ENCODE measurements at regions of chr12 and their contacts with region 1.

Region 1: GRCh38 chr12:51424662-51425438 is at the start of gene SLC4A8:
- DNase-seq: peak; percentile 97 to 99
- H3K4me3 ChIP-seq: peak within 1 kb of the TSS; percentile 57
- H3K4me3 Mint-ChIP-seq: peak within 1 kb of the TSS; percentile 81
- H3K27ac Mint-ChIP-seq: peak within 1 kb of the TSS; percentile 69
- H3K4me1 ChIP-seq: peaks cover 26% of the 10 kb centered on the region
- H3K4me1 Mint-ChIP-seq: peaks cover 48% of the 10 kb centered on the region
- H3K27me3 ChIP-seq: no peaks in the 10 kb centered on the region
- H3K27me3 Mint-ChIP-seq: no peaks in the 10 kb centered on the region
- CTCF ChIP-seq: peak; percentile 93 to 98
- total RNA-seq, gene SLC4A8: 62.7 and 67.0 TPM in 2 replicates

Region 2: DNA sequence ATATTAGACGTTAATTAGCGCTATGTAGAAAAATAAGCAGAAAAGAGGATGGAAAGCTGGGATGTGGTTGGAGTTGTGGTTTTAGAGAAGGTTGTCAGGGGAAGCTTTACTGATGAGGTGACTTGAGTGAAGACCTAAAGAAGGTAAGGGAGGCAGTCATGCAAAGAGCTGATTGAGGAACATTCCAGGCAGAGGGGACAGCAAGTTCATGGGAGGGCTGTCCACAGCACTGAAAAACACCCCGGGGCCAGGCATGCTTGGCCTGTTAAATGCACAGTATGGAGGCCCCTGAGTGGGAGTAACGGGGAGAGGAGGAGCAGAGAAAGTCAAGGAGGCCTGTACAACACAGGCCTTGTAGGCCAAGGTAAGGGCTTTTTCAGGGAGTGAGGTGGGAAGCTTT is 170.3 kb before region 1 on chr12:
- CTCF ChIA-PET with region 1: no interaction called
- POLR2A ChIA-PET with region 1: no interaction called
- intact Hi-C with region 1: no loop called
- DNase-seq: no peak
- H3K4me3 ChIP-seq: no peak overlapping the region
- H3K4me3 Mint-ChIP-seq: no peak overlapping the region
- H3K27ac Mint-ChIP-seq: no peak overlapping the region
- H3K4me1 ChIP-seq: no peaks in the 10 kb centered on the region
- H3K4me1 Mint-ChIP-seq: no peaks in the 10 kb centered on the region
- H3K27me3 ChIP-seq: no peaks in the 10 kb centered on the region
- H3K27me3 Mint-ChIP-seq: no peaks in the 10 kb centered on the region
- CTCF ChIP-seq: no peak

Region 3: GRCh38 chr12:51471111-51471864 is 46.4 kb after region 1 on chr12:
- CTCF ChIA-PET with region 1: interaction called, 4 read pairs
- POLR2A ChIA-PET with region 1: interaction called, 8 read pairs
- intact Hi-C with region 1: loop called (anchors 1 kb)
- DNase-seq: no peak
- H3K4me3 ChIP-seq: no peak overlapping the region
- H3K4me3 Mint-ChIP-seq: no peak overlapping the region
- H3K27ac Mint-ChIP-seq: peak overlapping the region; percentile 4
- H3K4me1 ChIP-seq: peaks cover 28% of the 10 kb centered on the region
- H3K4me1 Mint-ChIP-seq: peaks cover 15% of the 10 kb centered on the region
- H3K27me3 ChIP-seq: no peaks in the 10 kb centered on the region
- H3K27me3 Mint-ChIP-seq: no peaks in the 10 kb centered on the region
- CTCF ChIP-seq: no peak

Region 4: GRCh38 chr12:51678086-51678724 is 253.4 kb after region 1 on chr12:
- CTCF ChIA-PET with region 1: interaction called, 3 read pairs
- POLR2A ChIA-PET with region 1: no interaction called
- intact Hi-C with region 1: loop called (anchors 1 kb)
- DNase-seq: peak; percentile 64 to 77
- H3K4me3 ChIP-seq: no peak overlapping the region
- H3K4me3 Mint-ChIP-seq: no peak overlapping the region
- H3K27ac Mint-ChIP-seq: no peak overlapping the region
- H3K4me1 ChIP-seq: 0 out of 2 replicates have a peak, but pooled peaks cover 4% of the 10 kb centered on the region
- H3K4me1 Mint-ChIP-seq: peaks cover 14% of the 10 kb centered on the region
- H3K27me3 ChIP-seq: no peaks in the 10 kb centered on the region
- H3K27me3 Mint-ChIP-seq: no peaks in the 10 kb centered on the region
- CTCF ChIP-seq: peak; percentile 86 to 94

Region 5: GRCh38 chr12:51823875-51824565 is 399.2 kb after region 1 on chr12:
- CTCF ChIA-PET with region 1: interaction called, 8 read pairs
- POLR2A ChIA-PET with region 1: no interaction called
- intact Hi-C with region 1: loop called (anchors 1 kb)
- DNase-seq: peak in 1 of 2 experiments; percentile 73
- H3K4me3 ChIP-seq: no peak overlapping the region
- H3K4me3 Mint-ChIP-seq: no peak overlapping the region
- H3K27ac Mint-ChIP-seq: no peak overlapping the region
- H3K4me1 ChIP-seq: 0 out of 2 replicates have a peak, but pooled peaks cover 4% of the 10 kb centered on the region
- H3K4me1 Mint-ChIP-seq: no peaks in the 10 kb centered on the region
- H3K27me3 ChIP-seq: no peaks in the 10 kb centered on the region
- H3K27me3 Mint-ChIP-seq: no peaks in the 10 kb centered on the region
- CTCF ChIP-seq: peak; percentile 66 to 67